Activated CD4-positive, alpha-beta T cell treated with anti-CD3 and anti-CD28 coated beads for 36 hours (primary cell): ENCODE measurements at regions of chr3 and their contacts with region 1.

Region 1: GRCh38 chr3:851098-851795 is 241.6 kb upstream of the CNTN6 start:
- DNase-seq: peak; percentile 52
- ATAC-seq: peak; percentile 47
- H3K4me3 Mint-ChIP-seq: no peak overlapping the region
- H3K27ac Mint-ChIP-seq: no peak overlapping the region
- H3K4me1 Mint-ChIP-seq: no peaks in the 10 kb centered on the region
- H3K27me3 Mint-ChIP-seq: no peaks in the 10 kb centered on the region

Region 2: GRCh38 chr3:632572-633170 is 218.6 kb before region 1 on chr3:
- CTCF ChIA-PET with region 1: no interaction called
- POLR2A ChIA-PET with region 1: no interaction called
- intact Hi-C with region 1: loop called in 1 of 2 experiments (anchors 2 kb)
- DNase-seq: peak; percentile 64
- ATAC-seq: peak; percentile 47
- H3K4me3 Mint-ChIP-seq: no peak overlapping the region
- H3K27ac Mint-ChIP-seq: no peak overlapping the region
- H3K4me1 Mint-ChIP-seq: no peaks in the 10 kb centered on the region
- H3K27me3 Mint-ChIP-seq: no peaks in the 10 kb centered on the region

Region 3: DNA sequence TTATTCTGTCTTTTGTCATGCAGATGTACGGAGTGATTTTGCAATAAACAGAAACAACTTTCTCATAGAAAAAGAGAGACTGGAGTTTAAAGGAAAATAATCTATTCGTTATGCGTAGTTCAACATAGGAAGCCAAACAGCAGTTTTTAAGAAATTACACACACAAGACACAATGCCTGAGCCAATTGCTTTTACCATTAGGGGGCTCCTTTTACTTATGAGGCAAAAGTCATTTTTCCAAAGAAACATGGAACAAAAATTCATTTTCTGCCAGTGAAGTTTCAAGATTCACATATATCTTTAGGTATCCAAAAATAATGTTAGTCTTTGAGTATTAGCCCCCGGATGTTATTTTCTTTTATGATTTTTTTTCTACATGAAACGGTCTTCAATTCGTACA is 252.3 kb after region 1 on chr3:
- CTCF ChIA-PET with region 1: no interaction called
- POLR2A ChIA-PET with region 1: no interaction called
- intact Hi-C with region 1: no loop called
- DNase-seq: no peak
- ATAC-seq: no peak
- H3K4me3 Mint-ChIP-seq: no peak overlapping the region
- H3K27ac Mint-ChIP-seq: no peak overlapping the region
- H3K4me1 Mint-ChIP-seq: no peaks in the 10 kb centered on the region
- H3K27me3 Mint-ChIP-seq: no peaks in the 10 kb centered on the region